AG04449 (cell line): ENCODE measurements at regions of chr2 and their contacts with region 1.

Region 1: GRCh38 chr2:223797811-223798721 is 39.3 kb downstream of the AP1S3 start:
- DNase-seq: no peak
- H3K4me3 ChIP-seq: no peak overlapping the region
- CTCF ChIP-seq: peak; percentile 63

Region 2: DNA sequence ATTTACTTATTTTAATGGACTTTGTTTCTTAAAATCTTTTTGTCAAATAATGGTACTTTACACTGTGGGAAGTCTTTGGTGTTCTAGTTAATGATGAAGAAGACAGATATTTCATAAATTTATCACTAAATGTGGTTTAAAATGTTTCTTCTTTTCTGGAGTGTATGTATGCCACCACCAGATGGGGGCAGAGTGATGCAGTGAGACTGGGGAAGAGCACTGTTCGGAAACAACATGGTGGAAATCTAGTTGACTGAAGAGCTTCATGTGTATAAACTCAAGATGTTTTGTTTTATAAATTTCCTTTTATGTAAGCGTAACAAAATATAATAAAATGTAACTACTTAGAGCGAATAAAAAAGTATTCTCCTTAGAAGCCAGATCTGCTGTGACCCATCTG is 550.9 kb before region 1 on chr2:
- CTCF ChIA-PET with region 1: interaction called, 26 read pairs
- POLR2A ChIA-PET with region 1: no interaction called
- DNase-seq: no peak
- H3K4me3 ChIP-seq: no peak overlapping the region
- CTCF ChIP-seq: peak; percentile 42

Region 3: DNA sequence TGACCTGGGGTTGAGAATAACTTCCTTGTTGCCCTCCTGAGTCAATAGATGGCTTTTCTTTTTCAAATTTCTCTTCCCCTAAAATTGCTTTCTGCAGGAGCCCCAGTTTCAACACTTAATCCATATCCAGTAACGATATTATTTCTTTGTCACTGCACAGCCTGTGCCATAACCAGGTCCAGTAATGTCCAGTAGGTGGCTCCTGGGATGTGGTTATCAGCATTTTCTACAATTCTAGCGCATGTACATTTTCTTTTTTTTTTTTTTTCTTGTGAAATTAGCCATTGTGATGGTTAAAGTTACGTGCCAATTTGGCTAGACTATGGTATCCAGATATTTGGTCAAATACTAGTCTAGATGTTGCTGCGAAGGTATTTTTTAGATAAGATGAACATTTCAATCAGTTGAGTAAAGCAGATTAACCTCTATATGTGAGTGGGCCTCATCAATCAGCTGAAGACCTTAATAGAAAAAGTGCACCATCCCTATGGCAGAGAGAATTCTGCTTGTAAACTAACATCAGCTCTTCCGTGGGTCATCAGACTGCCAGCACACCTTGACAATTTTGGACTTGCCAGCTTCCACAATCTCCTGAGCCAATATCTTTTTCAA is 123.0 kb before region 1 on chr2:
- CTCF ChIA-PET with region 1: interaction called, 23 read pairs
- POLR2A ChIA-PET with region 1: no interaction called
- DNase-seq: no peak
- H3K4me3 ChIP-seq: no peak overlapping the region
- CTCF ChIP-seq: peak; percentile 57

Region 4: GRCh38 chr2:223697892-223698645 is 100.0 kb before region 1 on chr2:
- CTCF ChIA-PET with region 1: interaction called, 62 read pairs
- POLR2A ChIA-PET with region 1: no interaction called
- DNase-seq: no peak
- H3K4me3 ChIP-seq: no peak overlapping the region
- CTCF ChIP-seq: no peak

Region 5: DNA sequence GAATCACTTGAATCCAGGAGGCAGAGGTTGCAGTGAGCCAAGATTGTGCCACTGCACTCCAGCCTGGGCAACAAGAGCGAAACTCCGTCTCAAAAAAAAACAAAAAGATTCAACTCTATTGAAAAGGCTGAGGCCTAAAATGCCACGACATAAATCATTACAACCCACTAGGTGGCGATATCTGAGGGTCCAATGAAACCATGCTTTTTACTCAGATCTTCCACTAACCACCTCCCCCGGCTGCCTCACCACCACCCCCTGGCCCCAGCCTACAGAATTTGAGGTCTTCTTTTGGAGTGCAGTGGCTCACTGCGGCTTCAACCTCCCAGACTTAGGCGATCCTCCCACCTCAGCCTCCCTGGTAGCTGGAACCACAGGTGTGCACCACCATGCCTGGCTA is 18.2 kb before region 1 on chr2:
- CTCF ChIA-PET with region 1: interaction called, 15 read pairs
- POLR2A ChIA-PET with region 1: no interaction called
- DNase-seq: no peak
- H3K4me3 ChIP-seq: no peak overlapping the region
- CTCF ChIP-seq: no peak

Region 6: GRCh38 chr2:223930103-223930976 is 132.3 kb after region 1 on chr2:
- CTCF ChIA-PET with region 1: no interaction called
- POLR2A ChIA-PET with region 1: no interaction called
- DNase-seq: no peak
- H3K4me3 ChIP-seq: no peak overlapping the region
- CTCF ChIP-seq: no peak